ENCODE measurements at regions of chr20 and their contacts with region 1.

Region 1: GRCh38 chr20:1375515-1375914 is 17.3 kb downstream of the FKBP1A start:
- DNase-seq: no peak
- ATAC-seq: peak in 3 of 4 donors; percentile 46 to 64 (median 64)
- H3K4me3 ChIP-seq: peak overlapping the region in 1 of 12 donors; percentile 2
- H3K27ac ChIP-seq: peak overlapping the region in 11 of 12 donors; percentile 5 to 88 (median 62)
- H3K4me1 ChIP-seq: peaks cover 8 to 100% (median 86%) of the 10 kb centered on the region in 12 donors
- H3K27me3 ChIP-seq: no peaks in the 10 kb centered on the region
- CTCF ChIP-seq: no peak
- POLR2A ChIP-seq: no peak

Region 2: DNA sequence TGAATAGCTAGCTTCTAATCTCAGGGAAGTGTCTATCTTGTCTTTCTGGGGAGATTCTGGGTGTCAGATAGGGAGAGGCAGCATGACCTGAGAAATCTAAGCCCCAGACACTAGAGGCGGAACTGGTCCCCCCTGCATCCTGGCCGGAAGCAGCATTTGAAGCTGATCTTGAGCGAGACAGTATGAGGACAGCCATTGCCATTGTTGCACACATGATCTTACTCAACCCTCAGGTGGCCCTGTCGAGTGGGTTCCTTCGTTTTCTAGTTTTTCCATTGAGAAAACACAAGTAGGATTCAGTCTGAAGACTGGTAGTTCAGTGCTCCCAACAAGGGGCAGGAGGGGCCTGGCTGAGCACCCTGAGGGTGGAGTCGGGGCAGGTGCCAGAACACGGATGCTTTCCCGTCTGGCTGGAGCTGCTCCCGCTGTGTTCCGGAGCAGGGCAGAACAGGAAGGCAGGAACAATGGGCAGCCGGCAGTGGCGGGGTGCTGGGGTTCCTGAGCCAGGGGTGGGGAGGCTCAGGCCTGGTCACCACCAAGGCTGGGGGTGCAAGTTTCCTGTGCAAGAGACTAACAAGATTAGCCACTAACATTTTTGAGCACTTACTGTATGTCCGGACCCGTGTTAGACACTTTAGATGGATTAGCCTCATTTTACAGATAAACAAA is 38.7 kb before region 1 on chr20:
- intact Hi-C with region 1: loop called in 5 of 10 experiments (anchors 5 kb)
- DNase-seq: peak; percentile 87 to 91 (median 89)
- ATAC-seq: peak; percentile 91 to 97 (median 94)
- H3K4me3 ChIP-seq: peak overlapping the region in 3 of 12 donors; percentile 6 to 13 (median 10)
- H3K27ac ChIP-seq: peak overlapping the region; percentile 65 to 85 (median 75)
- H3K4me1 ChIP-seq: peaks cover 9 to 50% (median 28%) of the 10 kb centered on the region in 12 donors
- H3K27me3 ChIP-seq: no peaks in the 10 kb centered on the region
- CTCF ChIP-seq: no peak
- POLR2A ChIP-seq: no peak

Region 3: GRCh38 chr20:1576641-1577040 is 201.1 kb after region 1 on chr20:
- intact Hi-C with region 1: no loop called
- DNase-seq: no peak
- ATAC-seq: no peak
- H3K4me3 ChIP-seq: no peak overlapping the region
- H3K27ac ChIP-seq: no peak overlapping the region
- H3K4me1 ChIP-seq: no peaks in the 10 kb centered on the region
- H3K27me3 ChIP-seq: no peaks in the 10 kb centered on the region
- CTCF ChIP-seq: no peak
- POLR2A ChIP-seq: no peak